PC-9 (cell line): ENCODE measurements at regions of chr1 and their contacts with region 1.

Region 1: GRCh38 chr1:26602378-26602959 is 72.9 kb downstream of the RPS6KA1 start:
- DNase-seq: peak; percentile 41 to 54
- H3K4me3 ChIP-seq: no peak overlapping the region
- H3K27ac ChIP-seq: no peak overlapping the region
- H3K4me1 ChIP-seq: no peaks in the 10 kb centered on the region
- H3K27me3 ChIP-seq: no peaks in the 10 kb centered on the region
- CTCF ChIP-seq: peak; percentile 80

Region 2: DNA sequence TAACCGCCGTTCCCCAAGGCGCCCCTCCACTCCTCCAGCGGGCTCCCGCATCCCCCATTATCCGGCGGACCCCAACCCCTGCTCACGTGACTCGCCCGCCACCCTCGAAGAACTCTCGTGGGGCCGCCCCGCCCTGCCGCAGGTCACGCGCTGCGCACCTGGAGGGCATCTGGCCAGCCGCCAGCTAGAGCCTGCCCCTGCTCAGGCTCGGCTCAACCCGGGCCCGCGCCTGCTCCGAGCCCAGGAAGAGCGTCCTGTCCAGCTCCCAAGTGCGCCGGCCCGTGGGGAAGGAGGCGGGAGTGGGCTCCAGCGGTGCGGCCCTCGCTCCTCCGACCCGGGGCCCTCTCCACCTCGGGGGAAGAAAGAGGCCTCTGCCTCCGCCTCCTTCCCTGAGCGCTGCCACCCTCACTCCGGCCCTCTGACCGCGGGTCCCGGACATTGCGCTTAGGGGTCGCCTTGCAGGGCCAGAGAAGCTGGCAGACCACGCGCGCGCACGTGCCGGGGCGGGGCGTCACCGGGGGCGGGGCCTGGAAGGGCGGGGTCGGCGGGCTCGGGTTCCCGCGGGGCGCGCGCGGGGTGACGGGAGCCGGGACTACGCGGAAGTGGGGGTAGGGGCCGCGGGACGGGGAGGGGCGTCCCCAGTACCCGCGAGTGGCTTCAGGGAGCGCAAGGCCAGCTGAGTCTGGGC is 101.8 kb before region 1 on chr1:
- CTCF ChIA-PET with region 1: interaction called, 3 read pairs
- POLR2A ChIA-PET with region 1: interaction called, 3 read pairs
- intact Hi-C with region 1: loop called (anchors 5 kb)
- DNase-seq: peak; percentile 39 to 90
- H3K4me3 ChIP-seq: peak overlapping the region; percentile 52
- H3K27ac ChIP-seq: peak overlapping the region; percentile 68
- H3K4me1 ChIP-seq: no peaks in the 10 kb centered on the region
- H3K27me3 ChIP-seq: no peaks in the 10 kb centered on the region
- CTCF ChIP-seq: peak; percentile 1; the same call in 1 of the 2 replicates

Region 3: DNA sequence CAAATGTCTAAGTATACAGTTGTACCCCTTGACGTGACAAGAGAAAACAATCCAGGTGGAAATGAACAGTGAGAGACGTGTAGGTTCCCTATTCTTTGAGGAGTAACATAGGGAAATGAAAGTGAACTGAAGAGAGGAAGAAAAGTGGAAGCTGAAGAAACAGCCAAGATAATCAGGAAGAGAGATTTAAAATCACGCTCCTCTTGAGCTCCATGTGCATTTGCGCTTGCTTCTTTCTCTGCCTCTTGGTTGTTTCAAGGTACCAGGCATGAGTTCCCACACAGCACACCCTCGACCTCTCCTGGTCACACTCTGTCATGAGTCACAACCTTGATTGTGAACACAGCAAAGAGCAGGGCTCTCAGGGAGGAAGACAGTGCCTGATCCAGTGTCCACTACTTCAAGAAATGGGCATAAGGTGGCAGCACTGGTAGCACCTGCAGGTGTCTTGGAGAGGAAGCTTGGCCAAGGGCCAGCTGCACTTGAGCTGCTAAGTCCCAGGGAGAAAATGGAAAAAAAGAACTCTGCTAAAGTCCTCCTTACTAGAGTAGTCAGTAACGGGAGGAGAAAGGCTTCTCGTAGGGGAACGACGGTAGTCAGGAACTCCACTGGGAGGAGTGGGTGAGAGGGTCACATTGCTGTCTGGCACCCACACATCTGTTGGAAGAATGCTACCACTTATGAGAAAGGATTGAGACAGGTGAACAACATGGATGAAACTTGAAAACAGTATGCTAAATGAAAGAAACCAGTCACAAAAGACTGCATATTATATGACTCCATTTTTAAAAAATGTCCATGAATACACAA is 75.0 kb after region 1 on chr1:
- CTCF ChIA-PET with region 1: interaction called, 8 read pairs
- POLR2A ChIA-PET with region 1: no interaction called
- intact Hi-C with region 1: loop called (anchors 1 kb)
- DNase-seq: peak; percentile 86 to 91
- H3K4me3 ChIP-seq: no peak overlapping the region
- H3K27ac ChIP-seq: no peak overlapping the region
- H3K4me1 ChIP-seq: peaks cover 11% of the 10 kb centered on the region; the same call in 1 of the 2 replicates
- H3K27me3 ChIP-seq: no peaks in the 10 kb centered on the region
- CTCF ChIP-seq: peak; percentile 71

Region 4: DNA sequence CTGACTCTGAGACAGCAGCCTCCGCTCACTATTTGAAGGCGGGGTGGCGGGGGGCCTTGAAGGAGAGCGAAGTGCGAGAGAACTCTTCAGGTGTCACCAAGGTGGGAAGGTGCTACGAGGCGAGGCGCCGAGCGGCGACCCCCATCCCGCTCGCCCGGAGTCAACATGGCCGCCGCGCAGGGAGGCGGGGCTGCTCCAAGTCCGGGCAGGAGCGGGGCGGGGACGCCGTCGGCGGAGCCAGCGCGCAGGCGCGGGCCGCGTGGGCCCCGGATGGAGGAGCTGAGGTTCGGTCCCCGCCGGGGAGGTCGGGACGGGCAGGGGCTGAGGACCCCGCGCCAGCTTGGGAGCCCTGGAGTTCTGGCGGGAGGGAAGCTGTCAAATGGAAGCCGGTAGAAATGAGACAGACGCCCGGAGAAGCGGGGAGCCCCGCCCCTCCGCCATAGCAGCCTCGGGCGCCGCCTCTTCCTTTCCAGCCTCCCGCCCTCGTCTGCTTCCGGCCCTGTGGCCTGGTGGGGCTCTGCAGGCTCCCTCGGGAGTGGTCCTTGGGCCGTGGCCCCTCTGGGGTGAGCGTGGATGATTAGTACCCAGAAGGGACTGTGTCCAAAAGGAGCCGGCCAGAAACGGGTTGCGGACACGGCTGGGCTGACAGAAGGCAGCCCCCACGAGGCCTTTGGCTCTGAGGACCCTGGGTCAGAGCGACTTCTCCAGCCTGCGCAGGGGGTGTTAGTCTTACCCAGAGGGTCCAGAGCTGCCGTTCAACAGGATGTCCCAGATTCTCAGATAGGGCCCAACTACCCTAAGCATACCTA is 185.4 kb after region 1 on chr1 and contains the start of gene PIGV:
- CTCF ChIA-PET with region 1: interaction called, 8 read pairs
- POLR2A ChIA-PET with region 1: interaction called, 8 read pairs
- intact Hi-C with region 1: loop called (anchors 1 kb)
- DNase-seq: peak in 1 of 2 experiments; percentile 84
- H3K4me3 ChIP-seq: peak within 1 kb of the TSS; percentile 93
- H3K27ac ChIP-seq: peak within 1 kb of the TSS; percentile 92
- H3K4me1 ChIP-seq: peaks cover 52% of the 10 kb centered on the region
- H3K27me3 ChIP-seq: no peaks in the 10 kb centered on the region
- CTCF ChIP-seq: no peak
- total RNA-seq, gene PIGV: 30.8 and 31.9 TPM in 2 replicates

Region 5: GRCh38 chr1:26913754-26914619 is 311.5 kb after region 1 on chr1 and contains the start of gene NR0B2:
- CTCF ChIA-PET with region 1: no interaction called
- POLR2A ChIA-PET with region 1: interaction called, 10 read pairs
- intact Hi-C with region 1: no loop called
- DNase-seq: peak; percentile 37 to 84
- H3K4me3 ChIP-seq: no peak within 1 kb of the TSS
- H3K27ac ChIP-seq: peak within 1 kb of the TSS; percentile 44; the same call in 1 of the 2 replicates
- H3K4me1 ChIP-seq: peaks cover 11% of the 10 kb centered on the region
- H3K27me3 ChIP-seq: no peaks in the 10 kb centered on the region
- CTCF ChIP-seq: no peak
- total RNA-seq, gene NR0B2: not detected in 2 replicates

Region 6: GRCh38 chr1:27044613-27045151 is 442.2 kb after region 1 on chr1:
- CTCF ChIA-PET with region 1: no interaction called
- POLR2A ChIA-PET with region 1: no interaction called
- intact Hi-C with region 1: no loop called
- DNase-seq: peak; percentile 52 to 84
- H3K4me3 ChIP-seq: no peak overlapping the region
- H3K27ac ChIP-seq: no peak overlapping the region
- H3K4me1 ChIP-seq: no peaks in the 10 kb centered on the region
- H3K27me3 ChIP-seq: no peaks in the 10 kb centered on the region
- CTCF ChIP-seq: peak; percentile 89